Left ventricle myocardium inferior (tissue), 1 donor: ENCODE measurements at regions of chr4 and their contacts with region 1.

Region 1: GRCh38 chr4:165343353-165344191 is 16.1 kb downstream of the MSMO1 start:
- DNase-seq: no peak
- H3K4me3 ChIP-seq: no peak overlapping the region
- H3K27ac ChIP-seq: no peak overlapping the region
- H3K4me1 ChIP-seq: no peaks in the 10 kb centered on the region
- H3K27me3 ChIP-seq: no peaks in the 10 kb centered on the region
- CTCF ChIP-seq: peak; percentile 56

Region 2: DNA sequence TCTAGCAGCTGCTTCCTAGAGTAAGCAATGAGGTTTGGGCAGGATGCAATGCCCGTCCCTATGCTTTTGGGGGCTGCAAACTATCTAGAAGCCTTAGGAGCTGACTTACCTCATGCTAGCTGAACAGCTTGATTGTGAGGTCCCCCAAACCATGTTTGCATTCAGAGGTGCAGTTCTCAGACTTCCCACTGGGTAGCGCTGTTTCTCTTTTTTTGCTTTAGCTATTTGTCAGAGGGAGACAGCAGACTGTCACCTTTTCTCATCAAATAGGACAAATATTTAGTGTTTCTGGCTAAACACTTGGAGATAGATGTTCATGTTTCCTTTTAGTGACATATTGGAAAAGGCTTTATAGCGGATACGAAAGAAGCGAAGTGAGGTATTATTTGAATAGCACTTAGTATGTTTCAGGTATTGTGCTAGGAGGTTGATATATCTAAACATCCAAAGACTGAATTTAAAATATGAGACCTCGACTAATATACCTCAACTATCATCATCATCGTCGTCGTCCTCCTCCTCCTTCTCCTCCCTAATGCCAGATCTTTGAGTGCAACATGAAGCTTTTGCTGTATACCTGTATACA is 212.2 kb before region 1 on chr4:
- intact Hi-C with region 1: loop called (anchors 2 kb)
- DNase-seq: no peak
- H3K4me3 ChIP-seq: no peak overlapping the region
- H3K27ac ChIP-seq: no peak overlapping the region
- H3K4me1 ChIP-seq: no peaks in the 10 kb centered on the region
- H3K27me3 ChIP-seq: peaks cover 26% of the 10 kb centered on the region
- CTCF ChIP-seq: peak; percentile 89

Region 3: GRCh38 chr4:165532976-165533375 is 189.4 kb after region 1 on chr4:
- intact Hi-C with region 1: no loop called
- DNase-seq: no peak
- H3K4me3 ChIP-seq: no peak overlapping the region
- H3K27ac ChIP-seq: no peak overlapping the region
- H3K4me1 ChIP-seq: no peaks in the 10 kb centered on the region
- H3K27me3 ChIP-seq: no peaks in the 10 kb centered on the region
- CTCF ChIP-seq: no peak

Region 4: GRCh38 chr4:165931741-165932140 is 588.2 kb after region 1 on chr4:
- intact Hi-C with region 1: no loop called
- DNase-seq: no peak
- H3K4me3 ChIP-seq: no peak overlapping the region
- H3K27ac ChIP-seq: no peak overlapping the region
- H3K4me1 ChIP-seq: no peaks in the 10 kb centered on the region
- H3K27me3 ChIP-seq: no peaks in the 10 kb centered on the region
- CTCF ChIP-seq: no peak